Mucosa of descending colon (tissue), 3 donors: ENCODE measurements at regions of chr1 and their contacts with region 1.

Region 1: GRCh38 chr1:184982002-184982954 is 8.0 kb upstream of the NIBAN1 start:
- DNase-seq: peak; percentile 73 to 86 (median 79)
- ATAC-seq: peak; percentile 94
- H3K4me3 ChIP-seq: no peak overlapping the region
- H3K4me1 ChIP-seq: no peaks in the 10 kb centered on the region
- CTCF ChIP-seq: peak; percentile 84

Region 2: DNA sequence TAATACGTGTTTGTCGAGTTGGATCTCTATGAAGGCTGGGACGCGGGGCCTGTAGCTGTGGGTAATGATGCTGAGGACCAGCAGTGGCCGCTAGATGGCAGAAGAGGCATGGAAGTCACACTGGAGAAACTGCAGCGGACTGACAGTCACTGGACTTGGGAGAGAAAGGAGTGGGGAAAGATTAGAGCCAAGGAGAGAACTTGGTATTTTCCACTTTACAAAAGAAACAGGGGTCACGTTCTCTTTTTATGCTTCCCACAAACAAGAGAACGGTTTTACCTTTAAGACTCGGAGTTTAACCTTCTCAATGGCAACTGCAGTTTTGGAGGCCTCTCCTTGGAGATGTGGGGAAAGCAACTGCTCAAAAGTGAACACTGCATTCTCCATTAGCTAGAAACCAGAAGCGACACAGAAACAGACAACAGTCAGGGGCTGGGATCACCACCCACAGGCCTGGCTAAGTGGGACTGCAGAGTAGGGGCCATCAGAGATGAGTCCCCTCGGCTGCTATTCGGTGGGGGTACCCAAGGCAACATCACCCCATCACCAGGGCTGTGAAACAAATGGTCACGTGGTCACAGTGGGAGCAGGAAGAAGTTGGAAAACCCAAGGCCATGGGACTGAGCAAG is 176.5 kb before region 1 on chr1:
- intact Hi-C with region 1: loop called (anchors 2 to 5 kb)
- DNase-seq: peak; percentile 85 to 97 (median 91)
- ATAC-seq: peak; percentile 98
- H3K4me3 ChIP-seq: no peak overlapping the region
- H3K4me1 ChIP-seq: no peaks in the 10 kb centered on the region
- CTCF ChIP-seq: peak; percentile 80

Region 3: GRCh38 chr1:184823080-184823479 is 159.2 kb before region 1 on chr1:
- intact Hi-C with region 1: no loop called
- DNase-seq: no peak
- ATAC-seq: no peak
- H3K4me3 ChIP-seq: no peak overlapping the region
- H3K4me1 ChIP-seq: no peaks in the 10 kb centered on the region
- CTCF ChIP-seq: no peak